CD4-positive, alpha-beta memory T cell (primary cell): ENCODE measurements at regions of chr1 and their contacts with region 1.

Region 1: GRCh38 chr1:235415008-235415904 is 48.0 kb downstream of the TBCE start:
- DNase-seq: peak; percentile 53 to 64 (median 61)
- H3K4me3 ChIP-seq: no peak overlapping the region
- H3K4me3 Mint-ChIP-seq: no peak overlapping the region
- H3K27ac ChIP-seq: no peak overlapping the region
- H3K27ac Mint-ChIP-seq: peak overlapping the region in 1 of 7 donors; percentile 8
- H3K4me1 ChIP-seq: no peaks in the 10 kb centered on the region
- H3K4me1 Mint-ChIP-seq: peaks cover 6 to 11% (median 9%) of the 10 kb centered on the region in 4 donors
- H3K27me3 ChIP-seq: no peaks in the 10 kb centered on the region
- H3K27me3 Mint-ChIP-seq: no peaks in the 10 kb centered on the region

Region 2: DNA sequence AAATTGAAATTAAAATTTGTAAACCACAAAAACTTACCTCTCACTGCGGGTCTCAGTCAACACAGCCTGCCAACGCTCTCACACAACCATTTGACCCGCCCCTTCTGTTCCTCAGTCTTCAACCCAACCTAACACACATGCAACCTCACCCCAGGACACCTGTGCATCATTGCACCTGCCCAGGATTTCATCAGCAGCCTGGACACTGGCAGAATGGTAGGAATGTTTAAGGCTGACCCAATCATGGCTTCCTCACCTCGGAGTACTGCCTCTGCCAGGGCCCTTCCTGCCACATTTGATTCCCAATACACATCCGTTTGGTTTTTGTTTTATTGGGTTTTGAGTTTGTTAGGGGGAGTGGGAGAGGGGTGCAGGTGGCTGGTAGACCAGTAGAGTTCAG is 327.4 kb before region 1 on chr1:
- CTCF ChIA-PET with region 1: interaction called, 96 read pairs
- POLR2A ChIA-PET with region 1: no interaction called
- intact Hi-C with region 1: loop called (anchors 1 kb)
- DNase-seq: no peak
- H3K4me3 ChIP-seq: no peak overlapping the region
- H3K4me3 Mint-ChIP-seq: no peak overlapping the region
- H3K27ac ChIP-seq: no peak overlapping the region
- H3K27ac Mint-ChIP-seq: peak overlapping the region in 1 of 7 donors; percentile 60
- H3K4me1 ChIP-seq: peaks cover 11% of the 10 kb centered on the region
- H3K4me1 Mint-ChIP-seq: peaks cover 12 to 16% (median 13%) of the 10 kb centered on the region in 4 donors
- H3K27me3 ChIP-seq: no peaks in the 10 kb centered on the region
- H3K27me3 Mint-ChIP-seq: no peaks in the 10 kb centered on the region

Region 3: DNA sequence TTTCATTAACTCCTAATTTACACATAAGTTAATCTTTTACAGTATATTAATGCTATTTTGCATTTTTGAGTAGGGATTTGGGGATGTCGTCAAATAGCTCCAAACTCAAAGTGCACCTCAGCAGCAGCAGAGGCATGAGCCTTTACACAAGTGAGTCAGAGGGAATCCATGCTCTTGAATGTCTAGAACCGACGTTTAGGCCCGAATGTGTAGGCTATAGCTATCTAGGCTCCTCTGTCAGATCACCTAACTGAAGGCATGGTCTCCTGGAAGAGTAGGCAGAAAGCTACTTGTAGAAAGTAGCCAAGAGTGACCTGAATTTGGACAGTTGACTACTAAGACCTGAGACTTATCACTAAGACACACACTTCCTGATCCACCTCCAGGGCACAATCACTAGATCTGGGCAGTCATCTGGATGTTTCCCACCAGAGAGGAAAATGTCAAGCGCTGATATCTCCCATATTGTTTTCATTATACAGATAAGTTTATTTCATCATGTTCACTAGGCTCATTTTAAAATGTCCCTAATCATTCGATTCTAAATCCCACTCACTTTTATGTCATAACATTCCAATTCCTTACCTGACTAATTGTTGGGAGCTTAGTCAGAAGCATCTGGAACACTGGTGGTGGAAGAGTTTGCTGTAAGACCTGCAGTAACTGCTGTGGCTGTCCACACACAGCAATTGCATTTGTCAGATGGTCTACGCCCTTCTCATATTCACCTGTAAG is 301.9 kb before region 1 on chr1:
- CTCF ChIA-PET with region 1: interaction called, 17 read pairs
- POLR2A ChIA-PET with region 1: no interaction called
- intact Hi-C with region 1: no loop called
- DNase-seq: no peak
- H3K4me3 ChIP-seq: no peak overlapping the region
- H3K4me3 Mint-ChIP-seq: no peak overlapping the region
- H3K27ac ChIP-seq: no peak overlapping the region
- H3K27ac Mint-ChIP-seq: peak overlapping the region in 1 of 7 donors; percentile 3
- H3K4me1 ChIP-seq: no peaks in the 10 kb centered on the region
- H3K4me1 Mint-ChIP-seq: peaks cover 4 to 8% (median 6%) of the 10 kb centered on the region in 4 donors
- H3K27me3 ChIP-seq: no peaks in the 10 kb centered on the region
- H3K27me3 Mint-ChIP-seq: no peaks in the 10 kb centered on the region

Region 4: GRCh38 chr1:235199441-235199840 is 215.8 kb before region 1 on chr1:
- CTCF ChIA-PET with region 1: interaction called, 20 read pairs
- POLR2A ChIA-PET with region 1: interaction called, 3 read pairs
- intact Hi-C with region 1: no loop called
- DNase-seq: no peak
- H3K4me3 ChIP-seq: no peak overlapping the region
- H3K4me3 Mint-ChIP-seq: no peak overlapping the region
- H3K27ac ChIP-seq: no peak overlapping the region
- H3K27ac Mint-ChIP-seq: peak overlapping the region in 3 of 7 donors; percentile 9 to 70 (median 43)
- H3K4me1 ChIP-seq: no peaks in the 10 kb centered on the region
- H3K4me1 Mint-ChIP-seq: peaks cover 0 to 11% (median 6%) of the 10 kb centered on the region in 4 donors
- H3K27me3 ChIP-seq: no peaks in the 10 kb centered on the region
- H3K27me3 Mint-ChIP-seq: no peaks in the 10 kb centered on the region

Region 5: GRCh38 chr1:235239851-235240250 is 175.4 kb before region 1 on chr1:
- CTCF ChIA-PET with region 1: interaction called, 25 read pairs
- POLR2A ChIA-PET with region 1: interaction called, 3 read pairs
- intact Hi-C with region 1: no loop called
- DNase-seq: peak in 2 of 5 donors; percentile 9 to 10
- H3K4me3 ChIP-seq: no peak overlapping the region
- H3K4me3 Mint-ChIP-seq: peak overlapping the region in 2 of 8 donors; percentile 5 to 17
- H3K27ac ChIP-seq: no peak overlapping the region
- H3K27ac Mint-ChIP-seq: peak overlapping the region in 5 of 7 donors; percentile 30 to 86 (median 63)
- H3K4me1 ChIP-seq: peaks cover 30% of the 10 kb centered on the region
- H3K4me1 Mint-ChIP-seq: peaks cover 29 to 43% (median 35%) of the 10 kb centered on the region in 4 donors
- H3K27me3 ChIP-seq: no peaks in the 10 kb centered on the region
- H3K27me3 Mint-ChIP-seq: no peaks in the 10 kb centered on the region

Region 6: GRCh38 chr1:235328357-235329138 is 86.7 kb before region 1 on chr1 and contains the start of gene GGPS1:
- CTCF ChIA-PET with region 1: interaction called, 16 read pairs
- POLR2A ChIA-PET with region 1: interaction called, 3 read pairs
- intact Hi-C with region 1: loop called (anchors 1 kb)
- DNase-seq: peak; percentile 95 to 99 (median 98)
- H3K4me3 ChIP-seq: peak within 1 kb of the TSS; percentile 88 to 93
- H3K4me3 Mint-ChIP-seq: no peak within 1 kb of the TSS
- H3K27ac ChIP-seq: peak within 1 kb of the TSS; percentile 99
- H3K27ac Mint-ChIP-seq: peak within 1 kb of the TSS in 3 of 7 donors; percentile 90 to 93 (median 90)
- H3K4me1 ChIP-seq: peaks cover 73% of the 10 kb centered on the region
- H3K4me1 Mint-ChIP-seq: peaks cover 32 to 39% (median 35%) of the 10 kb centered on the region in 4 donors
- H3K27me3 ChIP-seq: no peaks in the 10 kb centered on the region
- H3K27me3 Mint-ChIP-seq: no peaks in the 10 kb centered on the region
- total RNA-seq, gene GGPS1: 50.3 to 52.5 TPM

Region 7: GRCh38 chr1:235809688-235810397 is 394.6 kb after region 1 on chr1:
- CTCF ChIA-PET with region 1: no interaction called
- POLR2A ChIA-PET with region 1: no interaction called
- intact Hi-C with region 1: no loop called
- DNase-seq: no peak
- H3K4me3 ChIP-seq: no peak overlapping the region
- H3K4me3 Mint-ChIP-seq: no peak overlapping the region
- H3K27ac ChIP-seq: no peak overlapping the region
- H3K27ac Mint-ChIP-seq: no peak overlapping the region
- H3K4me1 ChIP-seq: no peaks in the 10 kb centered on the region
- H3K4me1 Mint-ChIP-seq: peaks cover 0 to 2% (median 0%) of the 10 kb centered on the region in 4 donors
- H3K27me3 ChIP-seq: no peaks in the 10 kb centered on the region
- H3K27me3 Mint-ChIP-seq: no peaks in the 10 kb centered on the region